ENCODE measurements at regions of chr7 and their contacts with region 1.

Region 1: DNA sequence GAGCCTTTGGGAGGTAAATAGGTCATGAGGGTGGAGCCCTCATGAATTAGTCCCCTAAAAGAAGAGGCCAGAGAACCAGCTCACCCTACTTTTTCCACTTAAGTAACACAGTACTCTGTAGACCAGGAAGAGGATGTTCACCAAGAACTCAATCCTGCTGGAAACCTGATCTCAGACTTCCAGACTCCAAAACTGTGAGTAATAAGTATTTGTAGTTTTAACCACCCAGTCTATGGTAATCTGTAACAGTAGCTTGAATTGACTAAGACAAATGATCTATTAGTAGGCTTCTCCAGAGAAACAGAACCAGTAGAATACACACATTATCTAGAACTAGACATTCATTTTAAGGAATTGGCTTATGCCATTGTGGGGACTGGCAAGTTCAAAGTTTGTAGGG is 51.5 kb downstream of the ANKMY2 start:
- DNase-seq: no peak
- H3K4me3 ChIP-seq: no peak overlapping the region
- H3K4me3 Mint-ChIP-seq: no peak overlapping the region
- H3K27ac Mint-ChIP-seq: no peak overlapping the region
- H3K4me1 ChIP-seq: peaks cover 45% of the 10 kb centered on the region
- H3K4me1 Mint-ChIP-seq: peaks cover 32% of the 10 kb centered on the region
- H3K27me3 ChIP-seq: no peaks in the 10 kb centered on the region
- H3K27me3 Mint-ChIP-seq: no peaks in the 10 kb centered on the region
- CTCF ChIP-seq: no peak

Region 2: DNA sequence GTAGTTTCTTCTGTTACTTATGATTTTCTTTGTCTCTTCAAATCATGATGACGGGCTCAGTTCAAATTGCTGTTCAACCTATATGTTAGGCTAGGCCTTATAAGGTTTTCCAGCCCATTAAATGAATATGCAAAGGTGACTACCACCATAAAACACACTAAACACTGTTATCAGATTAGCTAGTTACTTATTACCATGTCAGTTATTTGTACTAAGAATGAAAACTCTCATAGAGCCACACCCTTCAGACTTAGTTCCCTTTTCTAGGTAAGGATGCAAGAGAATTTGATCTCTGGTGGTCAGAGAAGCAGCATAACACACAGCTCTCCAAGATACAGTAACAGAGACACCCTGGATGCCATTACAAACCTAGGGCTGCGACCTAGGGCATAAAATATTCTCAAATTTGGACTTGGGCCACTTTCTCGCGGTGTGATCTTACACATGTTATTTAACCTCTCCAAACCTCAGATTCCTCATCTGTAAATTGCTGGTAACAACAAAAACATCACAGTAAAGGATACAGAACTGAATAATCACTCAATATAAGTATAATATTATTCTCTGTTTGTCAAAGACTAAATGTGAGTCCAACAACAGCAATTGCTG is 15.9 kb after region 1 on chr7:
- CTCF ChIA-PET with region 1: no interaction called
- POLR2A ChIA-PET with region 1: interaction called, 16 read pairs
- intact Hi-C with region 1: loop called (anchors 1 kb)
- DNase-seq: peak in 1 of 2 experiments; percentile 47
- H3K4me3 ChIP-seq: no peak overlapping the region
- H3K4me3 Mint-ChIP-seq: peak overlapping the region; percentile 58
- H3K27ac Mint-ChIP-seq: peak overlapping the region; percentile 79
- H3K4me1 ChIP-seq: peaks cover 40% of the 10 kb centered on the region
- H3K4me1 Mint-ChIP-seq: peaks cover 44% of the 10 kb centered on the region
- H3K27me3 ChIP-seq: no peaks in the 10 kb centered on the region
- H3K27me3 Mint-ChIP-seq: no peaks in the 10 kb centered on the region
- CTCF ChIP-seq: no peak